ENCODE measurements at regions of chr7 and their contacts with region 1.

Region 1: GRCh38 chr7:86949052-86949778 is 110.2 kb downstream of the ELAPOR2 start:
- DNase-seq: peak in 1 of 3 donors; percentile 37
- ATAC-seq: no peak
- H3K4me3 ChIP-seq: no peak overlapping the region
- H3K27ac ChIP-seq: no peak overlapping the region
- H3K4me1 ChIP-seq: peaks cover 8% of the 10 kb centered on the region
- H3K27me3 ChIP-seq: no peaks in the 10 kb centered on the region

Region 2: DNA sequence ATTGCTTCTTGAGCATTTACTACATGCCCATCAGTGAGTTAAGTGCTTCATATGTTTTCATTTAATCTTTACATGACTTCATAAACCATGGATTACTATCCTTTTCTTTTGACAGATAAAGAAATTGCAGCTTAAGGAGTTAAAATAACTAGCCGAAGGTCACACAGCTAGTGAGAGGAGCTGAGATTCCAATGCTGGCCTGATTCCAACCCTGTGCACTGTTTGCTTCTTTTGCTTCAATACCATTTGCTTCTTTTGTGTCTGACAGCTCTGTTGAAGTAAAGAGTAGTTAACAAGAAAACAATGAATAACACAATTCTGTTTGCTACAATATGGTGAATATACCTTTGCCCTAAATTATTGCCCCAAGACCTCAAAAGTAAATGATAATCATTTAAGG is 173.1 kb before region 1 on chr7:
- intact Hi-C with region 1: no loop called
- DNase-seq: no peak
- ATAC-seq: no peak
- H3K4me3 ChIP-seq: no peak overlapping the region
- H3K27ac ChIP-seq: no peak overlapping the region
- H3K4me1 ChIP-seq: no peaks in the 10 kb centered on the region
- H3K27me3 ChIP-seq: no peaks in the 10 kb centered on the region

Region 3: DNA sequence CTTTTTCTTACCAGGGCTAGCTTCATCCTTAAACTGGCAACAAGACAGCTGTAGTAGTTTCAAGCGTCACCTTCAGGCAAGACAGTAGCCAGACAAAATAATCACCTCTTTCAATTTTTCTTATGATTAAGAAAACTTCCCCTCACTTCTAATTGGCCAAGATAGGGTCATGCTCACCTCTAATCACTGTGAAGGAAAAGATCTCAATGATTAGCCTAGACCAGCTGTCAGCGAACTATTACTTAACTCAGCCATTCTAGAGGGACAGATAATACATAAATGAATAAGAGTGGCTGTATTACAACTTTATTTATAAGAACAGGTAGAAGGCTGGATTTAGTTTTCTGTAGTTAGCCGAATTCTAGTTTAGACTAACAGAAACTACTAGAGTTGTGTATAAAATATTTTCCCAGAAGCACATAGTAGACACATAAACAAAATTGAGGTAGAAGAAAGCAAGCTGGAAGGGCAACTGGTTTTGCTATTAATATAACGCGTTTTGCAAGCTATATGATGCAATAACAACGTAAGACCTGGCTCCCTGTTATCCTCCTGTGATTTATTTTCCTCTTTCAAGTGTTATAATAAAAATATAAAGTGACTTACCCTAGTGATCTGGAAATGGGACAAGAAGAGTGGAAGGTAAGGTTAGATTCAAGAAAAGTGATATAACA is 46.0 kb after region 1 on chr7:
- intact Hi-C with region 1: loop called in 1 of 4 experiments (anchors 5 kb)
- DNase-seq: no peak
- ATAC-seq: no peak
- H3K4me3 ChIP-seq: no peak overlapping the region
- H3K27ac ChIP-seq: no peak overlapping the region
- H3K4me1 ChIP-seq: no peaks in the 10 kb centered on the region
- H3K27me3 ChIP-seq: no peaks in the 10 kb centered on the region

Region 4: GRCh38 chr7:87059525-87060287 is 110.5 kb after region 1 on chr7 and contains the start of gene ELAPOR2:
- intact Hi-C with region 1: loop called in 1 of 4 experiments (anchors 10 kb)
- DNase-seq: peak; percentile 80 to 93 (median 91)
- ATAC-seq: peak; percentile 99 to 100
- H3K4me3 ChIP-seq: peak within 1 kb of the TSS; percentile 93
- H3K27ac ChIP-seq: peak within 1 kb of the TSS; percentile 70
- H3K4me1 ChIP-seq: peaks cover 5% of the 10 kb centered on the region
- H3K27me3 ChIP-seq: no peaks in the 10 kb centered on the region
- total RNA-seq, gene ELAPOR2: 10.7 to 14.0 (median 12.6) TPM

Measured in right cardiac atrium (tissue), 5 donors.